AG04449 (cell line): ENCODE measurements at regions of chr2 and their contacts with region 1.

Region 1: DNA sequence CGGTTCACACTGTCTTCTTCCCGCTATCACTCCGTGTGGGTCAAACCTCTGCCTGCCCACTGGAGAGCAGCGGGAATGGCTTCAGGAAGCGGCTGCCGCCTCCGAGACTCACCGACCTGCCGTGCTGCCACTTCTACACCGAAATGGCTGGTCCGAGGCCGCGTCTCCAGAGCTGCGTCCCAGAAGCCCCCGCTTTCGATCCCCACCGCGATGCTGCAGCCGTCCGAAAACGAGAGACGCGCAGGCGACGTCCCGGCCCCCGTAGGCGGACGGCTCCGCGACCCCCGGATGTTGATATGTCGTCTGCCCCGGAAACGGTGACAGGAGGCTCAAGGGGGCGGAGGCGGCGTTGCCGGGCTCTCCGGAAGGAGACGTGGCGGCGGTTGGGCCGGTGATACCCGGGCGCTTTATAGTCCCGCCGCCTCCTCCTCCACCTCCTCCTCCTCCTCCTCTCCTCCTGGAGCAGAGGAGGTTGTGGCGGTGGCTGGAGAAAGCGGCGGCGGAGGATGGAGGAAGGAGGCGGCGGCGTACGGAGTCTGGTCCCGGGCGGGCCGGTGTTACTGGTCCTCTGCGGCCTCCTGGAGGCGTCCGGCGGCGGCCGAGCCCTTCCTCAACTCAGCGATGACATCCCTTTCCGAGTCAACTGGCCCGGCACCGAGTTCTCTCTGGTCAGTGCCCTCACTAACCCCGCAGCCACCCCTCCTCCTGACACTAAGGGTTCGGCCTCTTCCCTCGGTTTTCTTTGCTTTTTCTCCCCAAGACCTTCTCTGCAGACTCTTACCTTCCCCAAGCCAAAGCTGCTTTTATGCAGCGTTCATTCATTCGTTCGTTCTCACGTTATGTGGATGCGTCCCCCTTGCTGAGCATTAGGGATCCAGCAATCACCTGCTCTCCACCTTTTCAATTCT is at the starts of genes ASB3 and ERLEC1:
- DNase-seq: peak; percentile 34
- H3K4me3 ChIP-seq: peak within 1 kb of the TSS; percentile 57
- CTCF ChIP-seq: no peak

Region 2: DNA sequence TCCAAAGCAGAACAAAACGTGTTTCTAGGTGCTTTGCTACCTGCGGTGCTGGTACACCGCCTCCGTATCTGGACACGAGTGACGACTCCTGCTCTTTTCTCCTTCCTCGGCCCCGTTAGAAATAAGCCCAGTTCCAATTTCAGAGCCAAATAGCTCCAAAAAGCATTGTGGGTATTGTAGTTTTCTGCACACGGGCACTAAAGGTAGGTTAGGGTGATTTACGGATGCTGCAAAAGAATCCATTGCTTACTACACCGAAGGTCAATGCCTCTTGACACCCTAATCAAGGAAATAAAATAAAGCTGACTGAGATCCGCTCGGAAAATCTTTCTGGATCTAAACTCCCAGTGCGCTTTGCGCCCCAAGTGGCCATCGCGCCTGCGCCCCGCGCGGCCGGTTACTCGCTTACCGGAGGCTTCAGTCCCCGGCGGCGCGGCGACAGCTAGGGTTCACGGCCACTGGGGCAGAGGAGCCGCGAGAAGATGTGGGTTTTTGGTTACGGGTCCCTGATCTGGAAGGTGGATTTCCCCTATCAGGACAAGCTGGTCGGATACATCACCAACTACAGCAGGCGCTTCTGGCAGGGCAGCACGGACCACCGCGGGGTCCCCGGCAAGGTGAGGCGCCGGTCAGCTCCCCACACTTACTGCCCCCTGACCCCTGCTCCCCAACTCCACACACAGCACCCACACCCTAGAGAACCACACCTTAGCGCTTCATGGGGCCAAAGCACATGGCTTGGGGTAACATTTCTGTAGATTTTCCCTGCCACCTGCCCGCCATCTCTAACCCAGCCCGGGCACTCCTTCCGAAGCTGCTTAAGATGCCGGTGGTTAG is 19.3 kb before region 1 on chr2 and contains the start of gene CHAC2:
- CTCF ChIA-PET with region 1: interaction called, 10 read pairs
- POLR2A ChIA-PET with region 1: interaction called, 3 read pairs
- DNase-seq: no peak
- H3K4me3 ChIP-seq: peak within 1 kb of the TSS; percentile 77
- CTCF ChIP-seq: peak; percentile 49

Region 3: GRCh38 chr2:53865264-53865663 is 78.3 kb after region 1 on chr2:
- CTCF ChIA-PET with region 1: no interaction called
- POLR2A ChIA-PET with region 1: no interaction called
- DNase-seq: no peak
- H3K4me3 ChIP-seq: no peak overlapping the region
- CTCF ChIP-seq: no peak